Right ventricle myocardium superior (tissue), 1 donor: ENCODE measurements at regions of chr1 and their contacts with region 1.

Region 1: DNA sequence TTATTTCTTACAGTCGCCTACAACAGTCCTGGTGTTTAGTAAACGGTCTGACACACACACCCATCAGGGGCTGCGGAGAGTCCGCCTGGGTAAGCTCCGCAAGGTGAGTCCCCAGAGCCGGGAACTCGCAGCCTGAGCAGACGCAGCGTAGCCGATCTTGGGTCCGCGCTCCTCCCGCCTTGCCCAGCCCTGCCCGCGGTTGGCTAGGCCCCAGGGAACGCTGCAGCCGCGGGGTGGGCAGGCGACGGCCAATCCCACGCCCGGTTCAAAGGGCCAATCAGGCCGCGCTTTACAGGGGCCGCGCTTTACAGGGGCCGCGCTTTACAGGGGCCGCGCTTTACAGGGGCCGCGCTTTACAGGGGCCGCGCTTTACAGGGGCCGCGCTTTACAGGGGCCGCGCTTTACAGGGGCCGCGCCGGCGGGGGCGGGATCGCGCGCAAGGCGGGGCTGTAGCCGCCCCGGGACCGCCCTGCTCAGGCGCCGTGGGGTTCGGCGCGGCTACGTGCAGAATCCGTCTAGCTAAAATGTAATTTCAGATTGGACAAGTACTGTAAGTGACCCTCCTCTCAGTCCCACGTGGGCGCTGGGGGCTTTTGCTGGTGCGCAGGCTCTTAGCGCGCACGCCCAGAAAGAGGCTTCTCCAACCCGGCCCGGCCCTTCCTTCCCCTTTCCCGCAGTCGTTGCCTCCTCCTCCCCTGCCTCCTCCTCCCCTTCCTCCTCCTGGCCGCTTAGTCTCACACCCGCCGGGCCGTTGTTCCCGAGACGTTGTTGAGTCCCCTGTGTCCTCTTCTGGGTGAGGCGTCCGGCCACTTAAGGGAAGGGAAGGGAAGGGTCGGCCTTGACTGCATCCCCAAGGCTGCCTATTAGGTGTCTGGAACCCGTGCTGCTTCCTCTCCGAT is at the start of gene FGGY:
- DNase-seq: peak; percentile 99
- ATAC-seq: peak; percentile 93
- total RNA-seq, gene FGGY: 23.1 TPM

Region 2: DNA sequence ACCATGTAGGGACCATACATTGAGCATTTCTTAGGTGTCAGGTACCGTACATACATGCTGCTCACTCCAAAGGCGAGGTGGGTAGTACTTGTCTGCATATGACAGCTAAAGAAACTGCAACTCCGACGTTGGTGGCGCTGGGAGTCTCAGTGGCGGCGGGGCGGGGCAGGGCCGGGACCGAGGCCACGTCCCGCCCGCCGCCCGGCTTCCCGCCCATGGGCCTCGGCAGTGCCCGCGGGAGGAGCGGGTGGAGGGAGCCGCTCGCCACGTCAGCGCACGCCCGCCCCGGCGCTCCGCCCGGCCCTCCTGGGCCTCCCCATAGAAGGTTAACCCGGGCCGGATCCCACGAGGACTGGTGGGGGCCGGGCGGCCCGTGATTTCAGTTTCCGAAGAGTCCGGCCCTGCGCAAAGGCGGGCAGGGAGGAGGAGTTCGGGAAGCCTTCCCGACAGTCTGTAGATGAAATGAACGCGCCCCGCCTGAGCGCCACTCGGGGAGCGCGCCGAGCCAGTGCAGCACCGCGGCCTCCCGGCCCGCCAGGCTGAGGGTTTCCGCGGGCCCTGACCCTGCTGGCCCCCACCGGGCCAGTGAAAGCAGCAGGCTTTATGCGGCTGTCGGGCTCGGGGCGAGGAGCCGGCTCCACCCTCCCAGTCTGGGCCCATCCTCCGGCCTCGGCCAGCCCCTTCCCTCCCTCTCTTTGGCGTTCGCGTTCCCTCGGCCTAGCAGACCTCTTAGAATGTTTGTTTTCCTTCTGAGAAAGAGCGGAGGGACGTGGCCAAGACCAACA is 392.9 kb before region 1 on chr1:
- intact Hi-C with region 1: loop called (anchors 10 kb)
- DNase-seq: peak; percentile 97
- ATAC-seq: peak; percentile 97

Region 3: DNA sequence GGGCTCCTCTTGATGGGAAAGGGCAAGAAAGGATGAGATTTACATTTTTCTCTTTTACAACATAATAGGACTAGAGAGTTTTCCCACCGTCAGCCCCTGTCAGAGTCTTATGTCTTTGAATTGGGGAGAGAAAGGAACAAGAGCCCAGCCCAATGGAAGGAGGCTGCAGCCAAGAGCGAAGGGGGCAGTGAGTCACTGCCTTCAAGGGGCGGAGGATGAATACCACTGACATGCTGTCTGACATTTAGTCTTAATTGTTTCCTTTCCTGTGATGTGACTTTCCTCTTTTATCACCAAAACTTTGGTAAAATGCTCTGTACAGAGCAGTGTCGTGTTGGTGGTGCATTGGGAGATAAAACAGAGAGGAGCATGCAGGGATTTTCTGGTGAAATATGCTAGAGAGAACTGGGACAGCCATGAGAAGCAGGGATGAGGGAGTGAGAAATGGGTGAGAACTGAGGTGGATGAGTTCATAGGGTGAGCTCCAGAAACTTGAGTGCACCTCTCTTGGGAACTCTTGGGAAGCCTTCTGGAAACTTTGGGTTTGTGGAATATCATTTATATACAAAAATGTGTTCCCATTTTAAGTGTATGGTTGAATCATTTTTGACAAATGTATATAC is 179.6 kb before region 1 on chr1:
- intact Hi-C with region 1: no loop called
- DNase-seq: no peak
- ATAC-seq: no peak

Region 4: GRCh38 chr1:59150577-59151391 is 145.8 kb before region 1 on chr1:
- intact Hi-C with region 1: loop called (anchors 10 kb)
- DNase-seq: peak; percentile 86
- ATAC-seq: peak; percentile 93

Region 5: GRCh38 chr1:59391212-59392179 is 94.9 kb after region 1 on chr1:
- intact Hi-C with region 1: no loop called
- DNase-seq: no peak
- ATAC-seq: no peak

Region 6: GRCh38 chr1:59699227-59699847 is 402.7 kb after region 1 on chr1:
- intact Hi-C with region 1: loop called (anchors 10 kb)
- DNase-seq: no peak
- ATAC-seq: peak; percentile 35

Region 7: DNA sequence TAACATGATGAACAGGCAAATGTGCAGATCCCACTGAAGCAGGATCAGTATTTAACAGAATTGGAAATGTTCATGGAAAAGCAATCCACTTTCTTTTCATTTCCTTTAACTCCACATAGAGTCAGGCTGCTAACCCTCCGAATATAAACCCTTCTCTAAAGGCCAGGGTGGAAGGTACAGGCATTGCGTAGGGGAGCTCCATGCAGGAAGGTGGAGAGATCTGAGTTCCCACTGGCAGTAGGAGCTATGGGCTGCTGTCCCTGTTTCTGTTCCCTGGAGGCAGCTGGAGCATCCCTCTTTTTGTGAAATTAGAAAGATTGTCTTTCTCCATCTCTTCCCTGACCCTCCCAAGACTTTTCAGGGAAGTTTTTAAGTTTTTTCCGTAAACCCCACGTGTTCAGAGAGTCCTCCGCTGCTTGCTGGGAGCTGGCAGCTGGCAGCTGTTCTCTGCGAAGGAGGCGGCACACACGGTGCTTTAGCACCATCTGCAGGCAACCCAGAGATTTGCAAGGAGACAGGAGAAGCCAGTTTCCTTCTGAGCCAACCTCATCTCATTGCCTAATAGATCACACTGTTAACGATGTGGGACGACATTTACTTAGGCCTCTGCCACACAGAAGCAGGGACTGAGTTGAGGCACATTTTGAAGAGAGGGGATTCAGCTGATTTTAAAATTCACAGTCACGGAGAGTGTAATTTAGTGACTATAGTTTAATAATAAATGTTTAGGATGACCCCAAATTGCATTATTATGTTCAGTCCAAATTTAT is 462.7 kb after region 1 on chr1:
- intact Hi-C with region 1: loop called (anchors 10 kb)
- DNase-seq: peak; percentile 85
- ATAC-seq: peak; percentile 97